HCT116 (cell line): ENCODE measurements at regions of chr7 and their contacts with region 1.

Region 1: DNA sequence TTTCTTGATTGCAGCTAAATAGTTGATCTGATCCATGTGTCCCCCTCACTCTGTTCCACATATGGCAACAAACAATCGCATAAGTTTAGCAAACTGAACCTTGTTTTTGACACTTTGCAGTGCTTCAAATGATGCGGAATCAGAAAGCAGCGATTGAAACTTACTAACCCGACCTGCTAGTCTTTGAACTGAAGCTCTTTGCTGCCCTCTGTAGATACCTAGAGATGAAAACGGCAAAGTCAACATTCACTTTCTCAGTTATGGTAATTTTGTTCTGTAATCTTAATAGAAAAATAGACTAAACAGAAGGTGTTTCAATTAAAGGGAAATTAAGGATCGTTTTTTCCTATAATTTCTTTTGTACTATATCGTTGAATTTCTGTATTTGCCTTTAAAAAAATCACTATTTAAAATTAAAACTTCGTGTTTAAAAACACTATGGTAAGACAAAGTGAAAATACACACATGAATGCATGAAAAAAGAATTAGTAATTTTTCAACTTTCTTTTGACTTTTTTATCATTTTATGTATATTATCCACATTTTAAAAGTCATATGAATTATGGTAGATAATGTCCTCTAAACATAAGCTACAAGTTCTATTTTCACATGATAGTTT is 276.5 kb downstream of the MAGI2 start:
- DNase-seq: peak; percentile 24
- ATAC-seq: peak; percentile 83
- H3K4me3 ChIP-seq: no peak overlapping the region
- H3K27ac ChIP-seq: no peak overlapping the region
- H3K4me1 ChIP-seq: no peaks in the 10 kb centered on the region
- H3K27me3 ChIP-seq: no peaks in the 10 kb centered on the region
- CTCF ChIP-seq: peak; percentile 27 to 68 (median 60); a peak in 5 of 6 replicates
- POLR2A ChIP-seq: no peak
- RAD21 ChIP-seq: peak; percentile 73

Region 2: DNA sequence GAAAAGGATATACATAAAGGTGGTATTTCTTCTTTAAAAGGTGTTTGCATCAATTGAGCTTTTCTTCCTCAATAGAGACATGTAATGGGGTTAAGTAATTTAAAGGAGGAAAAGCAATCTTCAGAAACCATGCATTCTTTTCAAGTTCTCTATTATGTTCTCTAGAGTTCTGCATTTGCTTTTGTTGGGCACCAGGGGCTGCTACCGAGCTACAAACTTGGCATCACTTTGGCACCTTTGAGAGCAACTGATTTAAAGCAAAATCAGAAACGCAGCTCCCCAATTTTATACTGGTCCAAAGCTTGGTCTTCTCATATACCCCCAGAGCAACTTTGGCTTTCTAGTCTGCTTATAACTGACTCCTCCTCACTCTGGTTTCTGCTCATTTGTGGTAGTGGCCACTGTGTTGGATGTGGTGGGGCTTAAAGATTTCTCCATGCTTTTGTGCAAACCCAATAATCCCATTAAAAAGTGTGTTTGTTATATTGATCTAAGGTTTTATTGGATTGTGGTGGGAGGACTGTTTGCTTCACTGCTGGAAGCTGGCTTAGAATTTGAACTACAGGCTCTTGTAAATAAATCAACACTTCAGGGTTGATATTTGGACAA is 666.3 kb before region 1 on chr7:
- CTCF ChIA-PET with region 1: interaction called, 5 read pairs
- POLR2A ChIA-PET with region 1: no interaction called
- RAD21 ChIA-PET with region 1: no interaction called
- intact Hi-C with region 1: loop called (anchors 5 kb)
- DNase-seq: peak; percentile 8
- ATAC-seq: peak; percentile 75
- H3K4me3 ChIP-seq: no peak overlapping the region
- H3K27ac ChIP-seq: no peak overlapping the region
- H3K4me1 ChIP-seq: no peaks in the 10 kb centered on the region
- H3K27me3 ChIP-seq: no peaks in the 10 kb centered on the region
- CTCF ChIP-seq: peak in 2 of 3 experiments; percentile 70 to 71; a peak in 4 of 6 replicates
- POLR2A ChIP-seq: no peak
- RAD21 ChIP-seq: peak; percentile 68

Region 3: DNA sequence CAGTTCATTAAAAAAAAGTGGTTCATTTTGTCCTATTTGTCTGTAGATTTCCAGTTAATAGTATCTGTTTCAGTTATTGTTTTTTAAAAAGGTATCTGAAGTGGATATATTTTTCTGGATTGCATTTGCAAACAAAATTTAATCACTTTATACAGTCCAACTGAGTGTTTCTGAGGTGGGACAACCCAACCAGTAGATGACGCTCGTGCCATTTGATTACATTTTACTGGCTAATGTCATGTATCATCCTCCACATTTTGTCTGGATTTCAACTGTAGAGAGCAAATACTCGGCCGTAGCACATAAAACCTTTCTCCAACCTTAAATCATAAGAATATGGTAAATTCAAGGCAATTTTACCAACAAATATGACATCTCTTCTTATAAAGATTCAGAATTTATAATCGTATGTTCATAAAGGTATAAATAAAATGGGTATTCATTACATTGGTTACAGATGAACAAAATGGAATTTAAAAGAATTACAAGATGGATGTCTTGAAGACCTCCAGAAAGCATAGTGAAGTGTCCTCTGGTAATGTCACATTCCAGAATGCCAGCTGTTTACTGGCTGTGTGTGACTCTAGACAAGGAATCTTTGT is 589.4 kb before region 1 on chr7:
- CTCF ChIA-PET with region 1: interaction called, 7 read pairs
- POLR2A ChIA-PET with region 1: no interaction called
- RAD21 ChIA-PET with region 1: no interaction called
- intact Hi-C with region 1: loop called (anchors 2 kb)
- DNase-seq: peak; percentile 6
- ATAC-seq: peak; percentile 67
- H3K4me3 ChIP-seq: no peak overlapping the region
- H3K27ac ChIP-seq: no peak overlapping the region
- H3K4me1 ChIP-seq: no peaks in the 10 kb centered on the region
- H3K27me3 ChIP-seq: 0 out of 2 replicates have a peak, but pooled peaks cover 3% of the 10 kb centered on the region
- CTCF ChIP-seq: peak; percentile 54 to 79 (median 55); a peak in 4 of 6 replicates
- POLR2A ChIP-seq: no peak
- RAD21 ChIP-seq: peak; percentile 74